Heart left ventricle (tissue), 16 donors: ENCODE measurements at regions of chr14 and their contacts with region 1.

Region 1: DNA sequence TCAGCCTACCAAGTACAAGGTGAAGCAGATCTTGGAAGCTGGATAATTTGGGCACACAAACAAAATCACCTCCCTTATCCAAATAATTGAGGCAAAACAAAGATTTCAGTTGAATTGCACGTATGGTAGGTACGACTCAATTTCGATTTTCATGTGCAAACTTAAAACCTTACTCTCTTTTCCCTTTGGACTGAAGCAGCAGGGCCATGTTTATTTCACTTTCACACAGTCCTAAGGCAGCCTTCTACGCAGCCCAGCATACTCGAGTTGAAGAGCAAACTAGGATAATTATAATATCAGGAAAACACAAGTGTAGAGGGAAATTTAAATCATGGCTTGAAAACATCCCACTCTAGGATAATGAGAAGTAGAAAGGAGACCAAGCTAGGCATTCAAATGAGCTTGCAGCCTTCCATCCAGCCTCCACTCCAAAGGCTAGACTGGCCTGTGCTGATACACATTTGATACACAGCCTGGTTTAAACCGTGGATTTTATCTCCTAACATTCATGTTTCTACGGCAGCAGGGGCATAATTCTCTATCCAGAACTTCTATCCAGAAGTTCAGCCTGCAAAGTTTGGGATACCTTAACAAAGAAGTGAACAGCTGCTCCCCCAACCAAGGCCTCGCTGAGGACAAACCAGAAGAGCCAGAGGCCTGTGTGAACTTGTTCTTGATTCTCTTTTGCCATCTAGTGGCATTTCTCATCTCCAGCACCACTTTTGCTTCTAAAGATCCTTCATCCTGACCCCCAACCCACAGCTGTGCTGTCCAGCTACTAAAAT is 2.4 kb upstream of the RNASE7 start:
- DNase-seq: peak in 4 of 5 donors; percentile 45 to 61 (median 55)
- ATAC-seq: peak; percentile 53 to 75 (median 66)
- H3K4me3 ChIP-seq: peak overlapping the region in 5 of 12 donors; percentile 6 to 43 (median 9)
- H3K27ac ChIP-seq: peak overlapping the region; percentile 19 to 91 (median 74)
- H3K4me1 ChIP-seq: peaks cover 5 to 59% (median 36%) of the 10 kb centered on the region in 12 donors
- H3K27me3 ChIP-seq: no peaks in the 10 kb centered on the region
- CTCF ChIP-seq: peak; percentile 55 to 82 (median 71)
- POLR2A ChIP-seq: no peak

Region 2: GRCh38 chr14:20723488-20723887 is 316.3 kb before region 1 on chr14:
- intact Hi-C with region 1: no loop called
- DNase-seq: peak in 1 of 5 donors; percentile 30
- ATAC-seq: peak in 2 of 4 donors; percentile 33 to 65
- H3K4me3 ChIP-seq: peak overlapping the region in 8 of 12 donors; percentile 1 to 43 (median 32)
- H3K27ac ChIP-seq: peak overlapping the region in 1 of 12 donors; percentile 15
- H3K4me1 ChIP-seq: peaks cover 0 to 20% (median 0%) of the 10 kb centered on the region in 12 donors
- H3K27me3 ChIP-seq: peaks cover 0 to 10% (median 0%) of the 10 kb centered on the region in 9 donors
- CTCF ChIP-seq: no peak
- POLR2A ChIP-seq: no peak

Region 3: DNA sequence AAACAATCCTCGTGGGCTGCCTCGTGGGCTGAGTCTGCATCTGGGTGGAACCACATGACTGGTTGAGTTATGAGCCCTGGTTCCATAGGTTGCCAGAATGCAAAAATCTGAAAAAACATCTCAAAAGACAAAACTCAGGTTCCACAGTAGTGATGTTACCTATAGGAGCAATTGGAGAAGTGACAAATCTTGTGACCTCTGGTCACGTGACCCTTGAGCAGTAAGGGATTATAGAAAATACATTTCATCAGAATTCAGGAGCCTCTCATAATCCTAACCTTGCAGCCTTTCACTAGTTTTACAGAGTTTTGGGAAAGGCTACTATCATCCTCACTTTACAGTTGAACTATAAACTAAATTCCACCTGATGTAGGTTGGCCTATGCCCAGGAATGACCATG is 161.1 kb before region 1 on chr14:
- intact Hi-C with region 1: no loop called
- DNase-seq: no peak
- ATAC-seq: no peak
- H3K4me3 ChIP-seq: no peak overlapping the region
- H3K27ac ChIP-seq: no peak overlapping the region
- H3K4me1 ChIP-seq: peaks cover 0 to 13% (median 0%) of the 10 kb centered on the region in 12 donors
- H3K27me3 ChIP-seq: peaks cover 0 to 4% (median 0%) of the 10 kb centered on the region in 9 donors
- CTCF ChIP-seq: no peak
- POLR2A ChIP-seq: no peak

Region 4: DNA sequence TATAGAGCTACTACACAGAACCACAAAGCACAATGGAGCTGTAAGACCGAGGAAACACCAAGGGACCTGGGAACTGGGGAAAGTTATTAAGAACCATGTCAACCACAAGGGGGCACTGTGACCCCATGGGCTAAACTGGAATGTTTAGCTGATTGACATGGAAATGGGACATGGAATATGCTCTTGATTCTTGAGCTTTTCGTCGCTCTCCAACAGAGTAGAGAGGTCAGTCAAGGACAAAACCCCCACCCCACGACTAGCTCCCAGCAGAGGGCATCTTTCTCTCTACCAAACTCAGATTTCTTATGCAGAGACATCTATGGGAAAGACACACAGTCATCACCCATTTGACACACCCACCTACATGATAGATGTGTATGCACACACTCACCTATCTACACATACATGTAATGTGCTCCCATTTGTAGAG is 25.0 kb before region 1 on chr14:
- intact Hi-C with region 1: loop called (anchors 1 to 5 kb)
- DNase-seq: peak; percentile 82 to 85 (median 84)
- ATAC-seq: peak; percentile 58 to 85 (median 82)
- H3K4me3 ChIP-seq: no peak overlapping the region
- H3K27ac ChIP-seq: peak overlapping the region in 4 of 12 donors; percentile 9 to 28 (median 22)
- H3K4me1 ChIP-seq: peaks cover 0 to 27% (median 7%) of the 10 kb centered on the region in 12 donors
- H3K27me3 ChIP-seq: no peaks in the 10 kb centered on the region
- CTCF ChIP-seq: peak; percentile 86 to 99 (median 96)
- POLR2A ChIP-seq: no peak

Region 5: DNA sequence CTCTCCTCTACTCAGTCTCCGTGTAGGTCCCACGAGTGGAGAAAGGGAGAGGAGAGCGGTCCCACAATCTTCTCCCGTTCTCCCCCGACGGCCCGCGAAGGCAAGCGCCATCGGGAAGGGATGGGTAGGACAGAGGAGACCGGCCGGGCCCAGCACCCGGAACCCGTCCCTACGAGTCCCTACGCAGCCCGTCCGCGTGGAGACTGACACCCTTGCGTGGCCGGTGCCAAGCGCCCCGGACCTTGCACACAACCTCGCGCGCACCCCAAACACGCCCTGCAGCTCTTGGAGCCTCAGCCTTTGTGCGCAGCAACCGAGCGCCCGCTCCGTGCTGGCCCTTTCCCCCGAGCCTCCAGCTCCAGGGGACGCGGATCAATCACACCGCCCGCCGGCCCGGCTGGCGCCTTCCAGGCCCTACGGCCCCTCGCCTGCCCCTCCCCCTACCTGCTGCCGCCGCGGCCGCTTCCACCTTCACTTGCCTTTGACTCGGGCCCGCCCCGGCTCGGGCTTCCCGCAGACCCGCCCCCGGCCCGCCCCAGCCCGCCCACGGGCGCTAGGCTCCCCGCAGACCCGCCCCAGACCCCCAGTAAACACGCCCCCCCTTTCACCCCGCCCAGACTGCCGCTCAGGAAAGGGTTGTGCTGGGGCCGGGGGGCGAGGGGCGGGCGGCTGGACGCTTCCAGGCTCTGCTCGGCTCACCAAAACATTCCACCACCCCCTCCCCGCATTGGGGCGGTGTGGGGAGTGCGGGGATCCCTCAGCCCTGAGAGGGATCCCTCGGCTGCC is 15.0 kb before region 1 on chr14 and contains the start of gene NDRG2:
- intact Hi-C with region 1: loop called in 3 of 10 experiments (anchors 1 kb)
- DNase-seq: peak; percentile 88 to 93 (median 90)
- ATAC-seq: peak; percentile 70 to 90 (median 84)
- H3K4me3 ChIP-seq: peak within 1 kb of the TSS; percentile 66 to 98 (median 88)
- H3K27ac ChIP-seq: peak within 1 kb of the TSS; percentile 82 to 100 (median 98)
- H3K4me1 ChIP-seq: peaks cover 0 to 49% (median 30%) of the 10 kb centered on the region in 12 donors
- H3K27me3 ChIP-seq: peaks cover 0 to 7% (median 0%) of the 10 kb centered on the region in 9 donors
- CTCF ChIP-seq: no peak
- POLR2A ChIP-seq: peak in 1 of 2 donors; percentile 74
- total RNA-seq, gene NDRG2: 187 to 661 (median 301) TPM

Region 6: GRCh38 chr14:21071225-21072030 is 31.7 kb after region 1 on chr14:
- intact Hi-C with region 1: no loop called
- DNase-seq: peak; percentile 90 to 95 (median 92)
- ATAC-seq: peak; percentile 69 to 81 (median 74)
- H3K4me3 ChIP-seq: peak overlapping the region; percentile 68 to 99 (median 82)
- H3K27ac ChIP-seq: peak overlapping the region; percentile 86 to 99 (median 92)
- H3K4me1 ChIP-seq: peaks cover 0 to 40% (median 28%) of the 10 kb centered on the region in 12 donors
- H3K27me3 ChIP-seq: peaks cover 0 to 6% (median 0%) of the 10 kb centered on the region in 9 donors
- CTCF ChIP-seq: peak in 1 of 12 donors; percentile 20
- POLR2A ChIP-seq: peak in 1 of 2 donors; percentile 39